Calu3 (cell line): ENCODE measurements at regions of chr10 and their contacts with region 1.

Region 1: GRCh38 chr10:125629763-125630376 is 53.1 kb downstream of the TEX36 start:
- DNase-seq: peak; percentile 24
- H3K4me3 Mint-ChIP-seq: no peak overlapping the region
- H3K27ac Mint-ChIP-seq: no peak overlapping the region
- H3K4me1 Mint-ChIP-seq: peaks cover 8% of the 10 kb centered on the region
- H3K27me3 Mint-ChIP-seq: peaks cover 42% of the 10 kb centered on the region
- CTCF ChIP-seq: no peak

Region 2: DNA sequence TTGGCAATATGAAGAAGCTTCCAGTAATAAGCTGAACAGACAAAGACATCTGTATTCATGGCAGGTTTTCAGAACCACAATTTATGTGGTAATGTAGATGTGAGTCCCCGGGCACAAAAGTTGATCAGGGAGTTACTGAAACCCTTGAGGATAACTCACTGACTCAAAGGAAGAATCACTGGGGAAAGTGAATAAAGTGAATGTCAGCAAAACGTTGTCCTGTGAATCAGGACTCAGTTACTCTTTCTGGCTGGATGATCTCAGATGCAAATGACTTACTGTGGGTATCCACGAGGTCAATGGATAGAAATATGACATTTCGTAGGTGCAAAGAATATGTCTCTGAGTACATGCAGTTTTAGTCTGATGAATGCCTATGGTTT is 296.7 kb before region 1 on chr10:
- CTCF ChIA-PET with region 1: no interaction called
- intact Hi-C with region 1: no loop called
- DNase-seq: no peak
- H3K4me3 Mint-ChIP-seq: no peak overlapping the region
- H3K27ac Mint-ChIP-seq: no peak overlapping the region
- H3K4me1 Mint-ChIP-seq: no peaks in the 10 kb centered on the region
- H3K27me3 Mint-ChIP-seq: peaks cover 13% of the 10 kb centered on the region
- CTCF ChIP-seq: no peak

Region 3: DNA sequence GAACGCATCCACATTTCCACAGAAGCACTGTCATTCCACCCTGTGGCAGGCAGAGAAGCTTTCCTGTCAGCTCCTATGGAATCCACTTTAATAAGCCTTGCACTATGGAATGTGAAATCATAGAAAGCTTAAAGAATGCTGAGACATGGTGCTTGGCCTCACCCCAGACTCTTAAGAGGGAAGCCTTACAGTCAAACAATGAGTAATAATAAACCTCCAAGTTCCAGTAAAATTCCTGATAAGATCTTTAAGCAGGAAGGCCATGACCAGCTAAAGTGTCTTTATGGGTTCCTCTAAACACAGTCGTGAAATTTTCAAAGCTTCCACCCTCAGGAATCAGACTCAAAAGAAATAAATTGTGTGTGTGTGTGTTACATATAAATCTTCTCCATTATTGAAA is 65.0 kb after region 1 on chr10:
- CTCF ChIA-PET with region 1: no interaction called
- intact Hi-C with region 1: loop called (anchors 10 kb)
- DNase-seq: no peak
- H3K4me3 Mint-ChIP-seq: no peak overlapping the region
- H3K27ac Mint-ChIP-seq: no peak overlapping the region
- H3K4me1 Mint-ChIP-seq: peaks cover 23% of the 10 kb centered on the region
- H3K27me3 Mint-ChIP-seq: peaks cover 20% of the 10 kb centered on the region
- CTCF ChIP-seq: no peak